ENCODE measurements at regions of chr6 and their contacts with region 1.

Region 1: GRCh38 chr6:157667211-157668008 is 155.6 kb upstream of the SNX9 start:
- DNase-seq: peak; percentile 36
- ATAC-seq: peak; percentile 94
- H3K4me3 ChIP-seq: no peak overlapping the region
- H3K27ac ChIP-seq: no peak overlapping the region
- H3K4me1 ChIP-seq: no peaks in the 10 kb centered on the region
- H3K27me3 ChIP-seq: 0 out of 4 replicates have a peak, but pooled peaks cover 0 to 2% of the 10 kb centered on the region in 2 experiments
- CTCF ChIP-seq: peak; percentile 74 to 81 (median 79)
- EP300 ChIP-seq: no peak
- POLR2A ChIP-seq: no peak
- RAD21 ChIP-seq: peak; percentile 95

Region 2: DNA sequence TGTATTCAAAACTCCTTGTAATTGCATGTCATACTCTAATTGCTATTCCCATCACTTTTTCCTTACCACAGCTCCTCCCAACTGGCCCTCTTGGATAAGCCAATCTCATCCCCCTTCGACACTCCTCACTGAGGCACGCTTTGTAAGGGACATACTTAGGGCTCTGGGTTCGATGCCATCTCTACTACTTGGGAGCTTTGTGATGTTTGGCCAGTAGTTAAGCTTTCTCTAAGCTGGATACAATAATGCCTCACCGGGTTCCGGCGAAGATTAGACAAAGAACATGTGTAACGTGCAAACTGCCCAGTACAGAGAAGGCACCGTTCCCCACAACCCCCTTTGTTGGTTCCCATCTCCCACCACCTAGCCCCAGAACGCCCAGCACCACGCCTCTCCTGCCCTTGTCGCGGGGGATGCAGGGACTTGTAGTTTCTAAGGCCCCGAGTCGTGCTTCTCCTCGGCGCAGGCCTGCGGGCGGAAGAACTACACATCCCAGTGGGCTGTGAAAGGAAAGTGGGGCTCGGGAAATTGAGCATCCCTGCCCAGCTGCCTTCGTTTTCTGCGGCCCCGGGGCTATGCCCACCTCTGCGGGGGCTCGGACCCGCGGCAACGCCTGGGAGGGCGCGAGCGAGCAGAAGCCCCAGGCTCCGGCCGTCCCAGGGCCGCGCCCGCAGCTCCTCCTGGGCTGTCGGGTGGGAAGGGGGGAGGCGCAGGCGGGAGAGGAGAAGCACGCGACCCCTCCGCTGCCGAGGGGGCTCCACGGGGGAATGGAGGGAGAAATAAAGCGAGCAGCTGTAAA is 287.6 kb before region 1 on chr6:
- CTCF ChIA-PET with region 1: interaction called, 14 read pairs
- POLR2A ChIA-PET with region 1: no interaction called
- RAD21 ChIA-PET with region 1: interaction called, 4 read pairs
- SMC1A ChIA-PET with region 1: interaction called, 5 read pairs
- in situ Hi-C with region 1: no loop called
- intact Hi-C with region 1: loop called (anchors 5 kb)
- DNase-seq: peak; percentile 65
- ATAC-seq: peak; percentile 86
- H3K4me3 ChIP-seq: peak overlapping the region; percentile 98
- H3K27ac ChIP-seq: peak overlapping the region; percentile 50; the same call in 1 of the 2 replicates
- H3K4me1 ChIP-seq: no peaks in the 10 kb centered on the region
- H3K27me3 ChIP-seq: peaks cover 0 to 4% of the 10 kb centered on the region in 2 experiments; a peak in 1 of 4 replicates
- CTCF ChIP-seq: no peak
- EP300 ChIP-seq: no peak
- POLR2A ChIP-seq: 0 out of 2 replicates have a peak, but pooled peaks have one; percentile 42
- RAD21 ChIP-seq: no peak

Region 3: DNA sequence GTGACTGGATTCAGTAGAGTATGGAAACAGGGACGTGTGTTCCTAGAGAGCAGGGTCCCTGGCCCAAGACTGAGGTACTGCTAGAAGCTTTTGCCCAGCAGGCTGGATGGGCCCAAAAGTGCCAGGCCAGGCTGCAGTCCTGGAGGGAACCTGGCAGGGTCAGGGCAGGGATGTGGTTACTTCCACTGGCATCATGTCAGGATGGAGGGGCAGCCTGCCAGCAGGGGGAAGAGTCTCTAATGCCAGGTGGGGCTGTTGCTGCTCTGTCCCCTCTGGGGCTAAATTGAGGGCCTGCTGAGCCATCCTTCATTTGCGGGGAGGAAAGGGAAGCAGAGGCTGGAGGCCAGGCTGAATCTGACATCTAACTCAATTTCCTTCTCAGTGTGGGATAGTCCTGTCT is 269.3 kb before region 1 on chr6:
- CTCF ChIA-PET with region 1: interaction called, 4 read pairs
- POLR2A ChIA-PET with region 1: interaction called, 5 read pairs
- RAD21 ChIA-PET with region 1: no interaction called
- SMC1A ChIA-PET with region 1: interaction called, 3 read pairs
- in situ Hi-C with region 1: no loop called
- intact Hi-C with region 1: loop called (anchors 5 kb)
- DNase-seq: no peak
- ATAC-seq: no peak
- H3K4me3 ChIP-seq: no peak overlapping the region
- H3K27ac ChIP-seq: no peak overlapping the region
- H3K4me1 ChIP-seq: no peaks in the 10 kb centered on the region
- H3K27me3 ChIP-seq: no peaks in the 10 kb centered on the region; a peak in 1 of 4 replicates
- CTCF ChIP-seq: no peak
- EP300 ChIP-seq: no peak
- POLR2A ChIP-seq: no peak
- RAD21 ChIP-seq: no peak

Region 4: GRCh38 chr6:157571269-157571668 is 96.1 kb before region 1 on chr6:
- CTCF ChIA-PET with region 1: interaction called, 15 read pairs
- POLR2A ChIA-PET with region 1: no interaction called
- RAD21 ChIA-PET with region 1: interaction called, 17 read pairs
- SMC1A ChIA-PET with region 1: interaction called, 5 read pairs
- in situ Hi-C with region 1: no loop called
- intact Hi-C with region 1: no loop called
- DNase-seq: peak; percentile 68
- ATAC-seq: peak; percentile 69
- H3K4me3 ChIP-seq: no peak overlapping the region
- H3K27ac ChIP-seq: peak overlapping the region; percentile 60
- H3K4me1 ChIP-seq: peaks cover 22% of the 10 kb centered on the region
- H3K27me3 ChIP-seq: no peaks in the 10 kb centered on the region
- CTCF ChIP-seq: 0 out of 6 replicates have a peak, but pooled peaks of 1 of the 3 experiments have one; percentile 9
- EP300 ChIP-seq: peak; percentile 16 to 84; a peak in 1 of 4 replicates
- POLR2A ChIP-seq: no peak
- RAD21 ChIP-seq: no peak